ENCODE measurements at regions of chr18 and their contacts with region 1.

Region 1: GRCh38 chr18:36899289-36899688 is 70.4 kb downstream of the KIAA1328 start:
- DNase-seq: no peak
- ATAC-seq: no peak
- H3K4me3 Mint-ChIP-seq: no peak overlapping the region
- H3K27ac Mint-ChIP-seq: no peak overlapping the region
- H3K4me1 Mint-ChIP-seq: no peaks in the 10 kb centered on the region
- H3K27me3 Mint-ChIP-seq: no peaks in the 10 kb centered on the region
- CTCF ChIP-seq: peak; percentile 42

Region 2: GRCh38 chr18:36828630-36829361 is 70.5 kb before region 1 on chr18 and contains the starts of genes KIAA1328 and TPGS2:
- CTCF ChIA-PET with region 1: interaction called, 20 read pairs
- POLR2A ChIA-PET with region 1: interaction called, 3 read pairs
- DNase-seq: peak; percentile 83
- ATAC-seq: peak; percentile 90
- H3K4me3 Mint-ChIP-seq: peak within 1 kb of the TSS; percentile 79
- H3K27ac Mint-ChIP-seq: peak within 1 kb of the TSS; percentile 92
- H3K4me1 Mint-ChIP-seq: peaks cover 19% of the 10 kb centered on the region
- H3K27me3 Mint-ChIP-seq: no peaks in the 10 kb centered on the region; the same call in 1 of the 2 replicates
- CTCF ChIP-seq: no peak
- total RNA-seq, gene KIAA1328: 4.8 to 5.5 TPM (median 5.3 TPM) in 3 replicates
- total RNA-seq, gene TPGS2: 96.9 to 118 TPM (median 114 TPM) in 3 replicates

Region 3: DNA sequence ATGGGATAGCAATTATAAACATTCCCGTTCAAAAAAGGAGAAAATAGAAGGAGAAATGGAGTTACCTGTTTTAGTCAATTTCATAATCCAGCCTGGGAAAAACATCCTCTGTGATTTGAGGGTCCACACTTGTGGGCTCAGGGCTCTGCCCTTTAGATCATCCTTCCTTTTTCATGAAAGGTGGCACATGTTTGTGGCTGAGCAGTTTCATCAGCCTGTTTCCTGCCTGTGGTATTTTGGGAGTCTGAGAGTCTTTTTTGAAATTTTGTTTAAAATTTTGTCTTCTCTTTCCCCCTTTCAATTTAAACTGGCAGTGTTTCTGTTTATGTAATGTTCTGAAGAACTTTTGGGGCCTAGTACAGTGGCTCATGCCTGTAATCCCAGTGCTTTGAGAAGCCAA is 13.6 kb after region 1 on chr18:
- CTCF ChIA-PET with region 1: interaction called, 11 read pairs
- POLR2A ChIA-PET with region 1: no interaction called
- DNase-seq: no peak
- ATAC-seq: no peak
- H3K4me3 Mint-ChIP-seq: no peak overlapping the region
- H3K27ac Mint-ChIP-seq: no peak overlapping the region
- H3K4me1 Mint-ChIP-seq: no peaks in the 10 kb centered on the region
- H3K27me3 Mint-ChIP-seq: no peaks in the 10 kb centered on the region
- CTCF ChIP-seq: no peak

Region 4: GRCh38 chr18:36942264-36942663 is 43.0 kb after region 1 on chr18:
- CTCF ChIA-PET with region 1: no interaction called
- POLR2A ChIA-PET with region 1: no interaction called
- DNase-seq: no peak
- ATAC-seq: peak; percentile 69
- H3K4me3 Mint-ChIP-seq: no peak overlapping the region
- H3K27ac Mint-ChIP-seq: no peak overlapping the region
- H3K4me1 Mint-ChIP-seq: peaks cover 32% of the 10 kb centered on the region
- H3K27me3 Mint-ChIP-seq: no peaks in the 10 kb centered on the region
- CTCF ChIP-seq: peak; percentile 73

Region 5: GRCh38 chr18:37138456-37138855 is 239.2 kb after region 1 on chr18:
- CTCF ChIA-PET with region 1: no interaction called
- POLR2A ChIA-PET with region 1: no interaction called
- DNase-seq: peak; percentile 16
- ATAC-seq: peak; percentile 60
- H3K4me3 Mint-ChIP-seq: no peak overlapping the region
- H3K27ac Mint-ChIP-seq: no peak overlapping the region; the same call in 1 of the 2 replicates
- H3K4me1 Mint-ChIP-seq: peaks cover 35% of the 10 kb centered on the region
- H3K27me3 Mint-ChIP-seq: no peaks in the 10 kb centered on the region
- CTCF ChIP-seq: no peak

Region 6: GRCh38 chr18:37258819-37259218 is 359.5 kb after region 1 on chr18:
- CTCF ChIA-PET with region 1: interaction called, 10 read pairs
- POLR2A ChIA-PET with region 1: no interaction called
- DNase-seq: peak; percentile 5
- ATAC-seq: no peak
- H3K4me3 Mint-ChIP-seq: no peak overlapping the region
- H3K27ac Mint-ChIP-seq: no peak overlapping the region
- H3K4me1 Mint-ChIP-seq: peaks cover 8% of the 10 kb centered on the region
- H3K27me3 Mint-ChIP-seq: peaks cover 50% of the 10 kb centered on the region
- CTCF ChIP-seq: no peak

Measured in WTC11 (cell line).